ENCODE measurements at regions of chr10 and their contacts with region 1.

Region 1: GRCh38 chr10:35635576-35635975 is 6.5 kb downstream of the FZD8 start:
- DNase-seq: peak in 6 of 14 experiments; percentile 22 to 76 (median 62)
- ATAC-seq: peak; percentile 78
- H3K4me3 ChIP-seq: no peak overlapping the region
- H3K4me3 Mint-ChIP-seq: no peak overlapping the region
- H3K27ac ChIP-seq: no peak overlapping the region
- H3K27ac Mint-ChIP-seq: no peak overlapping the region
- H3K4me1 ChIP-seq: peaks cover 10% of the 10 kb centered on the region
- H3K4me1 Mint-ChIP-seq: peaks cover 15% of the 10 kb centered on the region
- H3K27me3 ChIP-seq: peaks cover 12 to 29% of the 10 kb centered on the region in 2 experiments
- H3K27me3 Mint-ChIP-seq: peaks cover 76% of the 10 kb centered on the region
- CTCF ChIP-seq: peak; percentile 84

Region 2: DNA sequence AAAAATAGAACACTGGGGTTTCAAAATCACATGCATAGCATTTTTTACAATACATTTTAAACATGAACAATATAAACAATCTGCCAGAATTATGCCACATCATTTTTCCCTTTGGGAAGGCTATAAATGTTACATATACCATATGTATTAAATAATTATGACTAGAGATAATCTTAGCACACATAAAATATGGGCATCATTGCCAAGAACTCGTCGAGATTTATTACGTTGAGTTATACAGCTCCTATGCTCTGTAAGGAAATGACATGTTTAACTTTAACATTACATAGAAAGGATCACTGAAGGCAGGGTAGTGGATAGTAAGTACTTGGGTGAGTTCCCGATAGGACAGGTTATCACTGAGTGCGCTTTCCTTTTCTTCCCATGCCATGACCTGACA is 1088.3 kb before region 1 on chr10:
- CTCF ChIA-PET with region 1: no interaction called
- POLR2A ChIA-PET with region 1: no interaction called
- intact Hi-C with region 1: no loop called
- DNase-seq: no peak
- ATAC-seq: no peak
- H3K4me3 ChIP-seq: no peak overlapping the region
- H3K4me3 Mint-ChIP-seq: no peak overlapping the region
- H3K27ac ChIP-seq: no peak overlapping the region
- H3K27ac Mint-ChIP-seq: no peak overlapping the region
- H3K4me1 ChIP-seq: no peaks in the 10 kb centered on the region
- H3K4me1 Mint-ChIP-seq: no peaks in the 10 kb centered on the region
- H3K27me3 ChIP-seq: no peaks in the 10 kb centered on the region
- H3K27me3 Mint-ChIP-seq: no peaks in the 10 kb centered on the region
- CTCF ChIP-seq: no peak

Region 3: DNA sequence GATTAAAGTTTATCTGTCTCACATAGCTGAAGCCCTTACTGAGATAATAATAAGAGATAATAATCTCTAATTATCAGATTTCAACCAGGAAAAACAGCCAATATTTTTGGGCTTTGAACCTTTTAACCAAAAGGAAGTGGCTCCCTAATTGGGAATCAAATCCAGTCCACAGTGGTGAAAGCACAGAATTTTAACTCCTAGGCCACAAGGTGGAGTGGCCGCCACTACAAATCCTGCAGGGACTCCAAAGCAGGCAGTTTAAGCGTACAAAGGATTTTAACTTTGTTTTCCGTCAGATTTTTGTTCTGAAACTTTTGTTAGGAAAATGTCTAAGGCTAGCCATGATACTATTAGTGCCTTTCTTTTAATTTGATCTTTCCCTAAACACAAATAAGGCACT is 398.8 kb before region 1 on chr10:
- CTCF ChIA-PET with region 1: no interaction called
- POLR2A ChIA-PET with region 1: no interaction called
- intact Hi-C with region 1: loop called in 1 of 2 experiments (anchors 10 kb)
- DNase-seq: no peak
- ATAC-seq: no peak
- H3K4me3 ChIP-seq: no peak overlapping the region
- H3K4me3 Mint-ChIP-seq: no peak overlapping the region
- H3K27ac ChIP-seq: no peak overlapping the region
- H3K27ac Mint-ChIP-seq: no peak overlapping the region
- H3K4me1 ChIP-seq: peaks cover 2% of the 10 kb centered on the region
- H3K4me1 Mint-ChIP-seq: no peaks in the 10 kb centered on the region
- H3K27me3 ChIP-seq: no peaks in the 10 kb centered on the region
- H3K27me3 Mint-ChIP-seq: no peaks in the 10 kb centered on the region
- CTCF ChIP-seq: no peak

Region 4: GRCh38 chr10:35605191-35605590 is 30.4 kb before region 1 on chr10 and contains the start of gene GJD4:
- CTCF ChIA-PET with region 1: no interaction called
- POLR2A ChIA-PET with region 1: no interaction called
- intact Hi-C with region 1: no loop called
- DNase-seq: no peak
- ATAC-seq: no peak
- H3K4me3 ChIP-seq: no peak within 1 kb of the TSS
- H3K4me3 Mint-ChIP-seq: no peak within 1 kb of the TSS
- H3K27ac ChIP-seq: no peak within 1 kb of the TSS
- H3K27ac Mint-ChIP-seq: no peak within 1 kb of the TSS
- H3K4me1 ChIP-seq: peaks cover 10% of the 10 kb centered on the region
- H3K4me1 Mint-ChIP-seq: peaks cover 6% of the 10 kb centered on the region
- H3K27me3 ChIP-seq: peaks cover 32 to 43% of the 10 kb centered on the region in 2 experiments
- H3K27me3 Mint-ChIP-seq: peaks cover 65% of the 10 kb centered on the region
- CTCF ChIP-seq: no peak
- total RNA-seq, gene GJD4: not detected

Region 5: DNA sequence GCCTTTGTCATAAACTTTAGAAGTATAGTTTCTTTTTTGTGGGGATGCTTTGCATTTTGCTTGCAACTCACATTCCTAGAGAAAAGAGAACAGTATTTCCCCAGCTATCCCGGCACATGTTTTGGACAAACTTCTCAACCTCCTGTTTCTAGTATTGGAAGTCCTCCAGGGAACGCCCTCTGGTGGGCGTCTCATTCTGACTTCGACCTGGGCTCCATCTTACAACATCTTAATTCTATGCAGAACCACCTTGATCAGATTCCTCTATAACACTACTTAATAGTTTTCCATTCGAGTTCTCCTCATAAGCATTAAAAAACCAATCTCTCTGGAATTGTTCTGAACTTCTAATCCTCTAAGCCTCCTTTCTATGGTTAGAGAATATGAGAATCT is 146.1 kb after region 1 on chr10:
- CTCF ChIA-PET with region 1: interaction called, 3 read pairs
- POLR2A ChIA-PET with region 1: no interaction called
- intact Hi-C with region 1: loop called in 1 of 2 experiments (anchors 5 kb)
- DNase-seq: peak in 2 of 14 experiments; percentile 2 to 7
- ATAC-seq: no peak
- H3K4me3 ChIP-seq: no peak overlapping the region
- H3K4me3 Mint-ChIP-seq: no peak overlapping the region
- H3K27ac ChIP-seq: no peak overlapping the region
- H3K27ac Mint-ChIP-seq: no peak overlapping the region
- H3K4me1 ChIP-seq: no peaks in the 10 kb centered on the region
- H3K4me1 Mint-ChIP-seq: no peaks in the 10 kb centered on the region
- H3K27me3 ChIP-seq: no peaks in the 10 kb centered on the region
- H3K27me3 Mint-ChIP-seq: peaks cover 9% of the 10 kb centered on the region
- CTCF ChIP-seq: no peak

Region 6: GRCh38 chr10:36880898-36881297 is 1245.3 kb after region 1 on chr10:
- CTCF ChIA-PET with region 1: no interaction called
- POLR2A ChIA-PET with region 1: no interaction called
- intact Hi-C with region 1: loop called (anchors 5 kb)
- DNase-seq: peak in 1 of 14 experiments; percentile 5
- ATAC-seq: no peak
- H3K4me3 ChIP-seq: no peak overlapping the region
- H3K4me3 Mint-ChIP-seq: no peak overlapping the region
- H3K27ac ChIP-seq: no peak overlapping the region
- H3K27ac Mint-ChIP-seq: no peak overlapping the region
- H3K4me1 ChIP-seq: no peaks in the 10 kb centered on the region
- H3K4me1 Mint-ChIP-seq: no peaks in the 10 kb centered on the region
- H3K27me3 ChIP-seq: no peaks in the 10 kb centered on the region
- H3K27me3 Mint-ChIP-seq: no peaks in the 10 kb centered on the region
- CTCF ChIP-seq: no peak